GM12878 (cell line): ENCODE measurements at regions of chr4 and their contacts with region 1.

Region 1: GRCh38 chr4:152278505-152279233 is 257.2 kb downstream of the FBXW7 start:
- DNase-seq: peak; percentile 71
- ATAC-seq: peak; percentile 87
- H3K4me3 ChIP-seq: no peak overlapping the region
- H3K27ac ChIP-seq: no peak overlapping the region
- H3K4me1 ChIP-seq: no peaks in the 10 kb centered on the region
- H3K27me3 ChIP-seq: no peaks in the 10 kb centered on the region; a peak in 1 of 4 replicates
- CTCF ChIP-seq: no peak
- EP300 ChIP-seq: no peak; a peak in 1 of 4 replicates
- POLR2A ChIP-seq: no peak
- RAD21 ChIP-seq: no peak

Region 2: DNA sequence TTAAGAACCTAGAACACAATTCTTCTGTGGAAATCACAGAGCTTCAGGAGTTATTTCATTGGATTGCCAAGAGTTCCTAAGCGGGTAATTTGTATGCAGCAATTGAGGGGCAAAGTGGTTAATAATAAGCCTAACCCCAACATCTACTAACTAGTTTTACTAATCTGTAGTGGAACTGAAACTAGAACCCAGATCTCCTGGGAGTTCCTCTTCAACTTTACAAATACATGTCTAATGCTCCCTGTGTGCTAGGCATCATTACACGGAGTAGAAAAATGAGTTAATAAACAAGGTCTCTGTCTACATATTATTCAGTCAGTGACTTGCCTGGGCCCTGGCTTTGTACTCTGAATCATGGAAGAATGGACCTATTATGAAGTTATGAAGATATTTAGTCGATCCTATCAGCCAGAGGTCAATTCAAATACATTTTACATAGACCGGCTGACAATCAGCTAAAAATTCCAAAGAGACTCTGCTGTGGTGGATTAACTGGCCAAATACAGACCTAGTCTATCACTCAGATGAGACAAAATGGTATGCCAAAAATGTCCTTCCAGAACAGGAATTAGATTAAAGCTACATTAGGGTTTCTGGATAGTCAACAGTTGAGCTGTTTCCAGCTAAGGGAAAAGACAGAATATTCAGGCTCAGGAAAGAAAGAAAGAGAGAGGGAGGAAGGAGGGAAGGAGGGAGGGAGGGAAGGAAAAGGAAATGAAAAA is 68.7 kb before region 1 on chr4:
- CTCF ChIA-PET with region 1: no interaction called
- POLR2A ChIA-PET with region 1: interaction called, 3 read pairs
- RAD21 ChIA-PET with region 1: interaction called, 3 read pairs
- SMC1A ChIA-PET with region 1: interaction called, 4 read pairs
- in situ Hi-C with region 1: no loop called
- intact Hi-C with region 1: loop called (anchors 2 kb)
- DNase-seq: peak; percentile 53
- ATAC-seq: peak; percentile 87
- H3K4me3 ChIP-seq: no peak overlapping the region
- H3K27ac ChIP-seq: no peak overlapping the region
- H3K4me1 ChIP-seq: no peaks in the 10 kb centered on the region
- H3K27me3 ChIP-seq: no peaks in the 10 kb centered on the region
- CTCF ChIP-seq: no peak
- EP300 ChIP-seq: peak in 1 of 2 experiments; percentile 62; a peak in 1 of 4 replicates
- POLR2A ChIP-seq: no peak
- RAD21 ChIP-seq: no peak